Activated naive CD8-positive, alpha-beta T cell treated with anti-CD3 and anti-CD28 coated beads, Interleukin-2, amount 10 ng/mL, durations not matched to agents 7 days and 5 days (primary cell): ENCODE measurements at regions of chr13 and their contacts with region 1.

Region 1: DNA sequence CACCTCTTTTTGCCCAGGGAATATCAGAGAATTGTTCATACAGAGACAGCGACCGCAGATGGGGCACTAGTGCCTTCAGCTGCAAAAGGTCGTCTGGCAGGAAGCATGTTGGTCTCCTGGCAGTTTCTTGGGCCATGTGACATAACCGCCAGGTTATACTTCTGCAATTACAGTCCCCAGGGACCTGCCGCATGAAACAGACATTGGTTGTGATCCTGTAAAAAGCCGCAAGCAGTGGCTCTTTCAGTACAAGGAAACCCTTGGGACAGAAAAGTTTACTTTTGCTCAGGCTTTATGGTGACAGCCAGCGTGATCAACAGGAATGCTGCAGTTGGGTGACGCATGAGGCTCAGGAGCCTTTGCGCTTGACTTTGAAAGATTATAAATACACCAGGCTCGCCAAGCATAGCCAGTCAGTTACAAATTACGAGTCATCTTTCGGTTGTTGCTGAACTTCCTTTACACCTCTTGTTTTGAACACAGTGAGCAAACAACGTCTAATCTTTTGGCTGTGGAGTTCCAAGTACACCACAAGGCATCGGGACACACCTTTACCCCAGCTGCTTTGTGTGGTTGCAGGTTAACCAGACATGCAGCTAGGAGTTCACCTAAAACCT is 50.5 kb upstream of the UBE2L5 start:
- DNase-seq: peak; percentile 57
- ATAC-seq: peak; percentile 47
- H3K4me3 Mint-ChIP-seq: peak overlapping the region; percentile 51
- H3K27ac Mint-ChIP-seq: peak overlapping the region; percentile 94
- H3K4me1 Mint-ChIP-seq: peaks cover 74% of the 10 kb centered on the region
- H3K27me3 Mint-ChIP-seq: no peaks in the 10 kb centered on the region

Region 2: DNA sequence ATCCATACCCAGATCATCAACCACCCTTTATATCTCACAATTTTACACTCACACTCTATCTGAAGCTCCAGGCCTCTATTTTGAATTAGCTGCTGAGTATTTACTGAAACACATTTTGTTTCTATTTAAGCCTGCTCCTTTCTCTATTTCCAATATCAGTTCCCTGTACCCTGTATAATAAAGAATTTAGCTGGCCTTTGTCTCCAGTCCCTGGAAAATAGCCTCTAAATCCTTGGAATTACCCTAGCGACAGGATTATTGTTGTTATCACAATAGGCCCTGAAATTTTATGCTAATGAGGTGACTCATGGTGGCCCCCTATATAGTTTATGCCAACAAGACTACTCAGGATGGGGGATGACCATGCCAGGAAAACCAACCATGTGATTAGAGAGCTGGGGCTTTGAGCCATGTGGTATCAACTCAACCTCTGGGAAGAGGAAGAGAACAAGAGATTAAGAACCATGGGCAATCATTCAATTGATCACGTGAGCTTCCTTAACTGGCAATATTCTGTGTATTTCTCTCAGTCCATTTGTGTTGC is 137.1 kb before region 1 on chr13:
- POLR2A ChIA-PET with region 1: no interaction called
- DNase-seq: no peak
- ATAC-seq: no peak
- H3K4me3 Mint-ChIP-seq: no peak overlapping the region
- H3K27ac Mint-ChIP-seq: no peak overlapping the region
- H3K4me1 Mint-ChIP-seq: no peaks in the 10 kb centered on the region
- H3K27me3 Mint-ChIP-seq: no peaks in the 10 kb centered on the region

Region 3: GRCh38 chr13:30257468-30258099 is 114.2 kb before region 1 on chr13:
- POLR2A ChIA-PET with region 1: no interaction called
- DNase-seq: no peak
- ATAC-seq: no peak
- H3K4me3 Mint-ChIP-seq: no peak overlapping the region
- H3K27ac Mint-ChIP-seq: no peak overlapping the region
- H3K4me1 Mint-ChIP-seq: peaks cover 3% of the 10 kb centered on the region
- H3K27me3 Mint-ChIP-seq: no peaks in the 10 kb centered on the region

Region 4: GRCh38 chr13:30306762-30307193 is 65.0 kb before region 1 on chr13:
- POLR2A ChIA-PET with region 1: interaction called, 13 read pairs
- DNase-seq: peak; percentile 91
- ATAC-seq: peak; percentile 92
- H3K4me3 Mint-ChIP-seq: peak overlapping the region; percentile 82
- H3K27ac Mint-ChIP-seq: peak overlapping the region; percentile 86
- H3K4me1 Mint-ChIP-seq: peaks cover 37% of the 10 kb centered on the region
- H3K27me3 Mint-ChIP-seq: no peaks in the 10 kb centered on the region

Region 5: DNA sequence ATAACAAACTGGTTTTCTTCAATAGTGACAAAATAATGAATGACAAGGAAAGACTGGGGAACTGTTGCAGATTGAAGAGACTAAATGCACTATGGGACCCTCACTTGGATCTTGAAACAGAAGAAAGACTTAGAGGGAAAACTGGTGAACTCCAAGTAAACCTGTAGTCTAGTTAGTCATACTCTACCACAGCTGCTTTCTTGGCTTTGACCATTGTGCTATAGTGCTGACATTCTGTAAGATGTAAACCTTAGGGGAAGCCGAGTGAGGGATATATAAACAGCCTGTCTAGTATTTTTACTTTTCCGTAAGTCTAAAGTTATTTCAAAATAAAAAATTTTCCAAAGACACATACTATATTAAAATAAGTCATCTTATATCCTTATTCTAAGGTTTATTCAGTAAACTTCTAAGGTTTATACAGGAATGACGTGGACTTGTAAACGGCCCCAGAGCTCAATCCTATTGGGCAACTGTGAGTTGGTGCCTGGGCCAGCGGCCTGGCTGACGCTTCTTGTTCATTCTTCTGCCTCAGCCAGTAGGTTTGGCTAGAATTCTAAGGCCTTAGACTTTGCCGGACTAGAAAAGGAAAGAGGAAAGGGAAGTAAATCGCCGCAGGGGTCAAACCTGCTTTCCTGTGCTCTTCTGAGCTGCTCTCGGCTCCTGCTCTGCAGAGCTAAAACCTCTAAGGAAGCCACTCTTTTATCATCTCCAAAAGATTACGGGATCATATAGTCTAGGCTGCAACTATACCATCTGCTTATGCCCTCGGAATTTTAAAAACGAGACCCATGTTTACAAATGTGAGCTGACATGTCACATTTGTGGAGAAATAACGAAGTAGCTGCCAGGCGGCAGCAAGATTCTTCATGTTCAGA is 16.9 kb after region 1 on chr13:
- POLR2A ChIA-PET with region 1: interaction called, 39 read pairs
- DNase-seq: no peak
- ATAC-seq: no peak
- H3K4me3 Mint-ChIP-seq: peak overlapping the region; percentile 74
- H3K27ac Mint-ChIP-seq: peak overlapping the region; percentile 88
- H3K4me1 Mint-ChIP-seq: peaks cover 29% of the 10 kb centered on the region
- H3K27me3 Mint-ChIP-seq: peaks cover 2% of the 10 kb centered on the region

Region 6: DNA sequence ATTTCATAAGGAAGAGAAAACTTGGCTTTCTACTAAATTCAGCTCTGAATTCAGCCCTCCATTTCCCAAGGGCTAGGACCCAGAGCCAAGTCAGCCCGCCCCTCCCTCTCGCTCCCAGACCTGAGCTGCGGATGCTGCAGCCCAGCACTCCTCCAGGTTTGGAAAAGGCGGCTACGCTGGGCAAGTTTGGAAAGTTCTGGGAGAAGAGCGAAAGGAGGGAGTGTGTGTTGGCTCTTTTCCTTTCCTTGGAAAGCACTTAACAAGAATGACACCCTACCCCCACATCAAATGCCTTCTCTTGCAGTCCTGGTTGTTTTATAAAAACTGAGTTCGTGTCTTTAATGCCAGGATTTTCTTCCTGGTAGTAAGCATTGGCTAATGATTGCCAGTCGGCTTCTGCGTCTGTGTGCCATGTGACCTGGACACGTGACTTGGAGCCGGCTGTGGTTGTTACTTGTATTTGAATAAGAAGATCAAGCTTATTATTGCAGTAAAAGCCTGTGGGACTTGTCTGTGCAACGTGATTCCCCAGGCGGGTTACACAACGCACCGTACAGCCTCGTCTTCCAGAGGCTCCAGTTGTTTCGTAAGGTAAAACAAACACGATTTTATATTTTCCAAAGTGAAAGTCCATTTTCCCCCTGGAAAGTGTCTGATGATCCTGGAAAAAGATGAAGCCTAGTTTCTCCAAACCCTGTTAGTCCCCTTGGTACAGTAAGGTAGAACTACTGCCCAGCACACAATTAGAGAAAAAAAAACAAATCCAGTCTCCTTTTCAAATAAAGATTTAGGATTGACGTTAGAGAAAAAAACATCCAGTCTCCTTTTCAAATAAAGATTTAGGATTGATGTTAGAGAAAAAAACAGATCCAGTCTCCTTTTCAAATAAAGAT is 23.7 kb after region 1 on chr13:
- POLR2A ChIA-PET with region 1: interaction called, 39 read pairs
- DNase-seq: peak; percentile 58
- ATAC-seq: peak; percentile 68
- H3K4me3 Mint-ChIP-seq: peak overlapping the region; percentile 88
- H3K27ac Mint-ChIP-seq: peak overlapping the region; percentile 99
- H3K4me1 Mint-ChIP-seq: peaks cover 29% of the 10 kb centered on the region
- H3K27me3 Mint-ChIP-seq: no peaks in the 10 kb centered on the region

Region 7: DNA sequence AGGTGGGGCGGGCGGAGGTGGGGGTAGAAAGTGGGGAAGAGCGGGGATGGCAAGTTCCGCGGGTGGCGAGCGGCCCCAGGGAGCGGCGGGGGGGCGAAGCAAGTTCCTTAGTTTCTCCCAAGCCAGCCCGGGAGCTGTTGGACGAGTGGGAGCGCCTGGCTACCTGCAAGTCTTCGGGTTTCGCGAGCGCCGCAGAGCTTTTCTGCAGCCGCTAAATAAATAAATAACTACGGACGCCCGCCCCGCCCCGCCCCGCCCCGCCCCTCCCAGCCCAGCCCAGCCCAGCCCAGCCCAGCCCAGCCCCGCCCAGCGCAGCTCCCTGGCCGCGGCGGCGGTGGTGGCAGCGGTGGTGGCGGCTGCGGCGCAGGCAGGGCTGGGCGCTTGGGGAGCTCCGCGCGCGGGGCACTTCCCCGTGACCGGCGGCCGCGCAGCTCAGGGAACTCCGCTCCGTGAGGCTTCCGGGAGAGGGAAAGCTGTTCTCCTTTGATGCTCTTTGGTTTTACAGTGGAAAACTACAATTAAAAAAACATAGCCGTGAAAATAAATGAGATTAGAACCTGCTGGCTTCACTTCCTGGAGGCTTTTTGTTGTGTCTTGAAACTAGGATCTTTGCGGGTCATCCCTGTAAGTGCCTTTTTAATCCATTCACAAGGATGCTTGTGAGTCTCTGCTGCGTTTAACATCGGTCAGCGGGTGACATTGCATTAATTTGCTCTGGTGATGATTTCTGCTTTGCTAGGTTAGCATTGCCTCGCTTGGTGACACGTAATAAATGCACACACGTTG is 50.5 kb after region 1 on chr13 and contains the start of gene UBE2L5:
- POLR2A ChIA-PET with region 1: interaction called, 14 read pairs
- DNase-seq: peak; percentile 89
- ATAC-seq: peak; percentile 91
- H3K4me3 Mint-ChIP-seq: peak within 1 kb of the TSS; percentile 75
- H3K27ac Mint-ChIP-seq: peak within 1 kb of the TSS; percentile 32
- H3K4me1 Mint-ChIP-seq: peaks cover 10% of the 10 kb centered on the region
- H3K27me3 Mint-ChIP-seq: no peaks in the 10 kb centered on the region
- total RNA-seq, gene UBE2L5: not detected